Posterior vena cava (tissue), 2 donors: ENCODE measurements at regions of chr18 and their contacts with region 1.

Region 1: GRCh38 chr18:29181151-29181901 is 1004.4 kb upstream of the CDH2 start:
- DNase-seq: no peak

Region 2: GRCh38 chr18:29512203-29512602 is 330.9 kb after region 1 on chr18:
- intact Hi-C with region 1: loop called in 1 of 2 experiments (anchors 10 kb)
- DNase-seq: no peak